Right lobe of liver (tissue), 6 donors: ENCODE measurements at regions of chr13 and their contacts with region 1.

Region 1: GRCh38 chr13:110819203-110820014 is 95.5 kb downstream of the ANKRD10 start:
- DNase-seq: peak; percentile 78 to 85 (median 84)
- ATAC-seq: peak; percentile 99 to 100 (median 100)
- H3K4me3 ChIP-seq: no peak overlapping the region
- H3K27ac ChIP-seq: no peak overlapping the region
- H3K4me1 ChIP-seq: no peaks in the 10 kb centered on the region
- H3K27me3 ChIP-seq: no peaks in the 10 kb centered on the region
- CTCF ChIP-seq: peak; percentile 95 to 100 (median 99)
- POLR2A ChIP-seq: no peak

Region 2: DNA sequence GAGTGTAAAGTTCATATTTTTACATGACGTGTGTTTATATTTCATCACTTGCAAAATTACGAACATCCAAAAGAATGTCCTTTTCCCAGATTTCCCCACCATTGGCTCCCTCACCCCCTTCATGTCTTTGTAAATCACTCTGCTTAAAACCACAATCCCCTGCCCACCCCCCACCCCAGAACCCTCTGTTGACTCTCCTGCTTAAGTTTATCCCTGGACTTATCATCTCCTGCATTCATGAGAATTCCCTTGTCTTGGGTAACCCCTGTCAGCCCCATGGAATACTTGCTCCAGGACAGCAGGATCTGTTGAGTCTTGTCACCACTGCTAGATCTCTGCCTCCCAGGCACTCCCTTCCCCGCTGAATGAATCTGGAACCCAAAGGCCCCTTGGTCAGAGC is 622.4 kb before region 1 on chr13:
- intact Hi-C with region 1: no loop called
- DNase-seq: no peak
- ATAC-seq: no peak
- H3K4me3 ChIP-seq: no peak overlapping the region
- H3K27ac ChIP-seq: no peak overlapping the region
- H3K4me1 ChIP-seq: no peaks in the 10 kb centered on the region
- H3K27me3 ChIP-seq: no peaks in the 10 kb centered on the region
- CTCF ChIP-seq: no peak
- POLR2A ChIP-seq: no peak

Region 3: DNA sequence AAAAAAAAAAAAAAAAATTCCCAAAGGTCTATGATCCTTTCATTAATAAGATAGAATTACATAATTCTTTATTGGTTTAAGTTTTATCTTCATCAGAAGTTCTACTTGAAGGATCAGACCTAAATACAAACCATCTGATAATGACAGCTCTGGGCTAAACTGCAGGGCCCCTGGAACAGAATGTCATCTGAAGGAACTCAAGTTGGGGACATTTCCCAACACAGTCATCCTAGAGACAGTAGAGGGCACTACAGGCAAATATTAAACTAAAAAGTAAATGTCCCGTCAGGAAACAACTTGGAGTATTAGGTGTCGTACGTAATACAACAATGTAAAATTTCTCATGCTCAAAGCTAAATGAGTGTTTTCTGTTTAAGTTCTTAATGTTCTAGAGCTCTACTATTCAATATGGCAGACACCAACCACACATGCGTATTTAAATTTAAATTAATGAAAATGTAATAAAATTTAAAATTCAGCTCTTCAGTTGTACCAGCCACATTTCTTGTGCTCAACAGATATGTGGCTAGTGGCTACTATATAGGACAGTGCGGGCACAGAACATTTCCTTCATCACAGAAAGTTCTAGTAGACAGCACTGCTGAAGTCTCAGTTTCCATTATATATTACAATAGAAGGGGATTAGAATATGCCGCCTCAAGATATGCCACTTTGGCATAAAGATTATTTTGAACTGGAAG is 225.8 kb before region 1 on chr13:
- intact Hi-C with region 1: loop called (anchors 10 kb)
- DNase-seq: peak in 1 of 3 donors; percentile 38
- ATAC-seq: peak; percentile 95 to 98 (median 97)
- H3K4me3 ChIP-seq: no peak overlapping the region
- H3K27ac ChIP-seq: no peak overlapping the region
- H3K4me1 ChIP-seq: no peaks in the 10 kb centered on the region
- H3K27me3 ChIP-seq: no peaks in the 10 kb centered on the region
- CTCF ChIP-seq: peak; percentile 61 to 73 (median 70)
- POLR2A ChIP-seq: no peak

Region 4: GRCh38 chr13:110680851-110681250 is 138.6 kb before region 1 on chr13:
- intact Hi-C with region 1: loop called in 1 of 2 experiments (anchors 10 kb)
- DNase-seq: no peak
- ATAC-seq: peak in 3 of 4 donors; percentile 20 to 48 (median 27)
- H3K4me3 ChIP-seq: no peak overlapping the region
- H3K27ac ChIP-seq: no peak overlapping the region
- H3K4me1 ChIP-seq: peaks cover 0 to 26% (median 11%) of the 10 kb centered on the region in 4 donors
- H3K27me3 ChIP-seq: no peaks in the 10 kb centered on the region
- CTCF ChIP-seq: peak; percentile 22 to 40 (median 35)
- POLR2A ChIP-seq: no peak